Calu3 (cell line): ENCODE measurements at regions of chr3 and their contacts with region 1.

Region 1: DNA sequence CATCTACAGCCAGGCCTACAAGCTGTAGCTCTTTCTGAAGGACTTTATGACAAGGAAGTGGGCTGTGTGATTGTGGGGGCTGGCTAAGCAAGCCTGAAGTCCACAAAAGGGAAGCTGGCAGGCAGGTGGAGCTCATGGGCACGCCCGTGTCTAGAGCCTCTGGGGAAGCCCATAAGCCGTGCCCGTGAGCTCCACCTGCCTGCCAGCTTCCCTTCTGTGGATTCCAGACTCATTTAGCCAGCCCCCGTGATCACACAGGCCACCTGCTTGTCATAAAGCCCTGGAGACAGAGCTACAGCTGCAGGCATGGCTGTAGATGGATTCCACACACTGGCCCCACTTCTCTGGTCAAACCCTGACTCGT is 15.2 kb downstream of the EFCC1 start:
- DNase-seq: peak; percentile 79
- H3K4me3 Mint-ChIP-seq: no peak overlapping the region
- H3K27ac Mint-ChIP-seq: no peak overlapping the region
- H3K4me1 Mint-ChIP-seq: peaks cover 7% of the 10 kb centered on the region
- H3K27me3 Mint-ChIP-seq: peaks cover 46% of the 10 kb centered on the region
- CTCF ChIP-seq: peak; percentile 12

Region 2: GRCh38 chr3:128993461-128994173 is 22.7 kb before region 1 on chr3 and contains the start of gene CFAP92:
- CTCF ChIA-PET with region 1: interaction called, 11 read pairs
- intact Hi-C with region 1: no loop called
- DNase-seq: peak; percentile 97
- H3K4me3 Mint-ChIP-seq: peak within 1 kb of the TSS; percentile 75
- H3K27ac Mint-ChIP-seq: peak within 1 kb of the TSS; percentile 60
- H3K4me1 Mint-ChIP-seq: peaks cover 16% of the 10 kb centered on the region
- H3K27me3 Mint-ChIP-seq: peaks cover 83% of the 10 kb centered on the region
- CTCF ChIP-seq: no peak
- total RNA-seq, gene CFAP92: 0.92 and 1.3 TPM in 2 replicates

Region 3: DNA sequence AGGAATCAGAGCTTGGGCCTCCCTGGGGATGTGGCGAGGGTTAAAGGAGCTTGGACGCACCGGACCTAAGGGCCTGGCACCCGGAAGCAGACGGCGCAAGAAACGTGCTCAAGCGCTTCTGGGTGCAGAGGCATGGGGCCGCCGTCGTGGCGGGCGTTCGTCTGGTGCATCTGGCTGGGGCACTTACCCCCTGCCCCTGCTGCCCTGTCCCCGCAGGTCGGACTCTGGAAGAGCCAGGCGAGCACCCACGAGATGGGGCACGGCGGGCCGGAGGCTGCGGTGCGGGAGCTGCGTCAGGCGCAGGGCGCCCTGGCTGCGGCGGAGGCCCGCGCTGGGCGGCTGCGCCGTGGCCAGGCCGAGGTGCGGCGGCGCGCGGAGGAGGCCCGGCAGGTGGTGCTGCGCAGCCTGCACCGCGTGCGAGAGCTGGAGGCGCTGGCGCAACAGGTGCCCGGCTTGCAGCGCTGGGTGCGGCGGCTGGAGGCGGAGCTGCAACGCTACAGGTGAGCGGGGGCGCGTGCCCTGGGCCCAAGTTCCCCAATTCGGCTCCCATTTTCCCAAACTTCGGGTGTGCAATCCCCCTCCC is 12.7 kb before region 1 on chr3:
- CTCF ChIA-PET with region 1: interaction called, 24 read pairs
- intact Hi-C with region 1: no loop called
- DNase-seq: peak; percentile 93
- H3K4me3 Mint-ChIP-seq: peak overlapping the region; percentile 56
- H3K27ac Mint-ChIP-seq: peak overlapping the region; percentile 30
- H3K4me1 Mint-ChIP-seq: peaks cover 21% of the 10 kb centered on the region
- H3K27me3 Mint-ChIP-seq: peaks cover 65% of the 10 kb centered on the region
- CTCF ChIP-seq: peak; percentile 52

Region 4: GRCh38 chr3:129026728-129027543 is 10.6 kb after region 1 on chr3:
- CTCF ChIA-PET with region 1: interaction called, 30 read pairs
- intact Hi-C with region 1: no loop called
- DNase-seq: peak; percentile 96
- H3K4me3 Mint-ChIP-seq: peak overlapping the region; percentile 44
- H3K27ac Mint-ChIP-seq: peak overlapping the region; percentile 17
- H3K4me1 Mint-ChIP-seq: peaks cover 8% of the 10 kb centered on the region
- H3K27me3 Mint-ChIP-seq: peaks cover 51% of the 10 kb centered on the region
- CTCF ChIP-seq: peak; percentile 86

Region 5: DNA sequence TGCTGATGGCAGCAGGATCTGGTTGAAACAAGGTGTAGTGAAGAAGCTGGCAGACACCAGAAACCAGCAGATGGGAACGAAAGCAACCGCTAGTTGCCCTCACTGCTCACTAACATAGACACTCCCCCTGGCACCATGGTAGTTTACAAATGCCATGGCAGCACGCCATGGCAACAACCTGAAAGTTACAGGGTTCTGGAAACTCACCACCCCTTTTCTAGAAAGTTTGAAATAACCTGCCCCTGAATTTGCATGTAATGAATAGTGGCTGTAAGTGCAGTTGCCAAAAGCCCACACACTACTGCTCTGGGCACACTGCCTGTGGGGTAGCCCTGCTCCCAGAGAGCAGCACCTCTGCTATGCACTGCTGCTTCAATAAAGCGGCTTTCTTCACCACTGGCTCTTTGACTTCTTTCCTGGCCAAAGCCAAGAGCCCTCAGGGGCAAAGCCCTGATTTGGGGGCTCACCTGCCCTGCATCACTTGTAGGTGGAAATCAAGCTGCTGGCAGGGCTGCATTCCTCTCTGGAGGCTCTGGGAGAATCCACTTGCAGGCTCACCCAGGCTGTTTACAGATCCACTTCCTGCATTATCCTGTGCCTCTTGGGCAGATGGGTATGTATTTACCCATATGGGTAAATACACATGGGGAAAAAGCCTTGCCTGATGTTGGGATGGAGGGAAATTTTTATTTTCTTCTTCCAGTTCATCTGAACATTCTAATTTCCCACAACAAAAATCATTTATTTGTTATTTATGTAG is 42.3 kb after region 1 on chr3:
- CTCF ChIA-PET with region 1: interaction called, 21 read pairs
- intact Hi-C with region 1: no loop called
- DNase-seq: peak; percentile 38
- H3K4me3 Mint-ChIP-seq: no peak overlapping the region
- H3K27ac Mint-ChIP-seq: no peak overlapping the region
- H3K4me1 Mint-ChIP-seq: peaks cover 26% of the 10 kb centered on the region
- H3K27me3 Mint-ChIP-seq: peaks cover 36% of the 10 kb centered on the region
- CTCF ChIP-seq: no peak

Region 6: DNA sequence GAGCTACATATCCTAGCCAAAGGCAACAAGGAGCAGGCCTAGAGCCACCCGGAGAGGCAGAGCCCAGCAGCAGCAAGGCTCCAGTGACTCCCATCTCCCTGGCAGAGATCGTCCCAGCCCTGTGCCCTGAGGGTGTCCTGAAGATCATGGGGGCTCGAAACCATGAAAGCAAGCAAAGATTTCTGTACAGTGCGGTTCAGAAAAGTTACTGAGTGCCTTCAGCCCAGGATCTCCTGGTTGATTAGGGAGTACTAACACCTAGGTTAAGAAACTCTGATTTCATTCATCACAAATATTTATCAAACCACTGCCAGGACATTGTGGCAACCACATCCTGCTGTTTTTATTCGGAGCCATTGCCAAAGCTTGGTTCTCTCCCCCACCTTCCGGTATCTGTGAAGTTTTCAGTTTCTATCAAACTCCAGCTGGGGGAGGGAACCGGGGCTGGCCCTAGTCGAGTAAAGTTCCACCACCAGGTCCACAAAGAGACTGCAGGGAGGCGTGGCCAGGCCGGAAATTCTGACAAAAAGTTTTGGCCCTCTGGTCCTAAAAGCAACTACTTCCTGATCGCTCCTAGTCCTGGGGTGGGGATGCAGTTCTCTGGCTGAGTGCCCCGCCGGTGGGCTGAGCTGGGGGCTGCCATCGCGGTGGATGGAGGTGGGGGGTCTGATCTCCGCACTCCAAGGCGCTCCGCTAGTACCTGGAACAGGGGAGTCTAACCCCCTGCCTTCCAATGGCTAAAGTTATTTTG is 104.1 kb after region 1 on chr3:
- CTCF ChIA-PET with region 1: interaction called, 13 read pairs
- intact Hi-C with region 1: no loop called
- DNase-seq: peak; percentile 94
- H3K4me3 Mint-ChIP-seq: peak overlapping the region; percentile 69
- H3K27ac Mint-ChIP-seq: peak overlapping the region; percentile 27
- H3K4me1 Mint-ChIP-seq: peaks cover 55% of the 10 kb centered on the region
- H3K27me3 Mint-ChIP-seq: no peaks in the 10 kb centered on the region
- CTCF ChIP-seq: no peak

Region 7: GRCh38 chr3:129211772-129212171 is 195.4 kb after region 1 on chr3:
- CTCF ChIA-PET with region 1: no interaction called
- intact Hi-C with region 1: no loop called
- DNase-seq: peak; percentile 95
- H3K4me3 Mint-ChIP-seq: no peak overlapping the region
- H3K27ac Mint-ChIP-seq: peak overlapping the region; percentile 33
- H3K4me1 Mint-ChIP-seq: peaks cover 16% of the 10 kb centered on the region
- H3K27me3 Mint-ChIP-seq: no peaks in the 10 kb centered on the region
- CTCF ChIP-seq: no peak